Dorsolateral prefrontal cortex (tissue), 120 donors: ENCODE measurements at regions of chr6 and their contacts with region 1.

Region 1: DNA sequence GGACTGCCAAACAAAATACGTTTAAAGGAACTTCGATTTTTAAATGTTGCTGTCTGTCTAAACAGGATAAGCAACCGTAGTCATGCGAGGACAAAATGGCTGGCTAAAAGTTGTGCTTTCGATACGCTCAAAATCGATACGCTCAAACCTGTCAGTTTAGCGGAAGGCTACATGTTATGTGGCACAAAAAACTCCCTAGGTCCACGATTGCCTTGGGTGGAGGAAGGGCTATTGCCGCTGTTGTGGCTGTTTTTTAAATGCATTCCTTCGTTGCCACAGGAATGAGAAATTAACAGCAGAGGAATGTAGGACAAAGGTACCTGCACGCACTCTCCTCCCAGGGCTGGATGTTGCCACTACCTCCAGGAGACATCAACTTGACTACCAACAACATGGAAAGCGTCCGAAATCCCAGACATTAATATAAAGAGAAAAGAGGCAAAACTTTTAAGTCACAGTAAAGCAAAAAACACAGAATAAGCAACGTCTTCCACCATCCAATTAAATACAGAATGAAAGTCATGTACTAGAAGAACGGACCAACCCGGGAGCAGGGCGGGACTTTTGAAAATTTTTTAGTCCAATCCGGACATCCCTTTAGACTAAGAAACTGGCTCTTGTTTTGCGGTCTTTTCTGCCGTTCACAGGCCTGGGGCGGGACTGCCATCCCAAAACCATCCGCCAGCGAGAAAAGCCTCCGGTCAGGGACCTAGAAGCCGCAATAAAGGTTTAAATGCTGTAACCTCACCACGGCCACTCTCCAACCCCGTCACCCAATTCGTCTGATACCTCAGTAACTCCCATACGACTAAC is 32.2 kb upstream of the HFE start:
- DNase-seq: peak; percentile 65 to 96 (median 88)
- H3K4me3 ChIP-seq: peak overlapping the region; percentile 55 to 99 (median 81)
- H3K27ac ChIP-seq: peak overlapping the region; percentile 10 to 98 (median 91)
- H3K27me3 ChIP-seq: no peaks in the 10 kb centered on the region
- CTCF ChIP-seq: peak in 40 of 56 donors; percentile 6 to 56 (median 35)

Region 2: DNA sequence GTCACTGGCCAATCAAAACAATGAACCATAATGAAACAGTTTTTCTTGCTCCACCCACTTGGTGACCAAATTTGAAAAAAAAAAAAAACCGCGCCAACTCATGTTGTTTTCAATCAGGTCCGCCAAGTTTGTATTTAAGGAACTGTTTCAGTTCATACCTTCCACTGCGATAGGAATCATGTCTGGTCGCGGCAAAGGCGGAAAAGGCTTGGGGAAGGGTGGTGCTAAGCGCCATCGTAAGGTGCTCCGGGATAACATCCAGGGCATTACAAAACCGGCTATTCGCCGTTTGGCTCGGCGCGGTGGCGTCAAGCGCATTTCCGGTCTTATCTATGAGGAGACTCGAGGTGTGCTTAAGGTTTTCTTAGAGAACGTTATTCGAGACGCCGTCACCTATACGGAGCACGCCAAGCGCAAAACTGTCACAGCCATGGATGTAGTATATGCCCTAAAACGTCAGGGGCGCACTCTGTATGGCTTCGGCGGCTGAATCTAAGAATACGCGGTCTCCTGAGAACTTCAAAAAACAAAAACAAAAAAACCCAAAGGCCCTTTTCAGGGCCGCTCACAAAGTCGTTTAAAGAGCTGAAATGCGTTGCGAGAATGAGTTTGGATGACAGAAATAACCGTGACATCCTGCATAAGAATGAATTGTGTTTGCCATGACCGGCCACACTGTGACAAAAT is 48.9 kb after region 1 on chr6:
- intact Hi-C with region 1: loop called in 1 of 2 experiments (anchors 2 kb)
- DNase-seq: peak; percentile 69 to 93 (median 87)
- H3K4me3 ChIP-seq: peak overlapping the region; percentile 41 to 86 (median 70)
- H3K27ac ChIP-seq: peak overlapping the region in 58 of 59 donors; percentile 24 to 94 (median 84)
- H3K27me3 ChIP-seq: no peaks in the 10 kb centered on the region
- CTCF ChIP-seq: peak in 44 of 56 donors; percentile 14 to 54 (median 32)